Right ventricle myocardium superior (tissue), 1 donor: ENCODE measurements at regions of chr10 and their contacts with region 1.

Region 1: DNA sequence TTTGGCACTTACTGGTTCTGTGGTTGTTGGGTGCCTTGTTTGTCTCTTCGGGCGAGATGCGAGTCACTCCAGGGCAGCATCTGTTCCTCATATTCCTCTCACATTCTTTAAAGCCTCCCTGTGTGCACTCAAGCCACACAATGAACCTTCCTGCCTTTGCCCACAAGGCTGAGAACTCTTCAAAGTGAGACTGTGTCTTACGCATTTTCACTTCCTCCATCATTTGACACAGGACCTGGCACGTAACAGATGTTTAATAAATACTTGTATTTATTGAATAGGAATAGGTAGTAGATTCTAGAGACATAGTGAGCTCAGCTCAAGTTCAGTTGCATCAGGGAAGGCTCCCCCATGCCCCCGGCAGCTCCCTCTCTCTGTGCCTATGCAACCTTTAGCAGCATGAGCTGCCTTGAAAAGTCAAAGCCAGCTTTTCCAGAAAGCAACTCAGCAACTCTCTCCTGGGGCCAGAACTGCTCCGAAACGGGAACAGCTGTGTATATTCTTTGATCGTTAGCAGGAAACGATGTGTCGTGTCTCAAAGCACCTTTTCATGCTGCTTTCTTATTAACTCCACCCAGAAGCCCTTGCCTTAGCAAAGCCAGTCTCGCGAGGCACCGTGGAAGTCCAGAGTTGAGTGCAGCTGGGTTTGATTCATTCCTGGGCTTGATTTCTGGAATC is 97.5 kb downstream of the PFKFB3 start:
- DNase-seq: no peak
- ATAC-seq: peak; percentile 57

Region 2: GRCh38 chr10:5951167-5951711 is 349.0 kb before region 1 on chr10:
- intact Hi-C with region 1: no loop called
- DNase-seq: peak; percentile 73
- ATAC-seq: peak; percentile 84

Region 3: DNA sequence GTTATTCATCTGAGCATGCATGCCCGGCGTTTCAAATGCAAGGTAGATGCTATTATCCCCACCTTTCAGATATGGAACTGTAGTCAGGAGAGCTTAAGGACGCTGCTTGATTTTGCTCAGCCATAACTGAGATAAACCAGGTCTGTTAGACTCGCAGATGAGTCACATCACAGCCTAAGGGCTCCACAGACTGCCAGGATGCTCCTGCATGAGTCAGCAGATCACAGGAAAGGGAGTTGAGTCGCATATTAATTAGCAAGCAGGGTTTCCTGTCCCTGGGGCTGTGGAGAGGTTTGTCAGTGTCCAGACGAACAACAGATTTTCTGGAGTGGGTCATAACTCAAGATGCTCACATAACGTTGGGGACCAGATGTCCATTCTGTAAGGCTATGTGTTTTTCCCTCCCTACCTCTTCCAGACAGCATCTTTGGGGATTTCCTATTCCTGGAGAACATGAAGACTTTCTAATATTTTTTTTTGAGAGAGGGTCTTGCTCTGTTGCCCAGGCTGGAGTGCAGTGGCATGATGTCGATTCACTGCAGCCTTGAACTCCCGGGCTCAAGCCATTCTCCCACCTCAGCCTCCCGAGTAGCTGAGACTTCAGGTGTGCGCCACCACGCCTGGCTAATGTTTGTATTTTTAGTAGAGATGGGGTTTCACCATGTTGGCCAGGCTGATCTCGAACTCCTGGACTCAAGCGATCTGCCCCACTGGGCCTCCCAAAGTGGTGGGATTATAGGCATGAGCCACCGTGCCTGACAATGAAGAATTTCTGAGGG is 60.8 kb before region 1 on chr10:
- intact Hi-C with region 1: no loop called
- DNase-seq: no peak
- ATAC-seq: peak; percentile 39

Region 4: DNA sequence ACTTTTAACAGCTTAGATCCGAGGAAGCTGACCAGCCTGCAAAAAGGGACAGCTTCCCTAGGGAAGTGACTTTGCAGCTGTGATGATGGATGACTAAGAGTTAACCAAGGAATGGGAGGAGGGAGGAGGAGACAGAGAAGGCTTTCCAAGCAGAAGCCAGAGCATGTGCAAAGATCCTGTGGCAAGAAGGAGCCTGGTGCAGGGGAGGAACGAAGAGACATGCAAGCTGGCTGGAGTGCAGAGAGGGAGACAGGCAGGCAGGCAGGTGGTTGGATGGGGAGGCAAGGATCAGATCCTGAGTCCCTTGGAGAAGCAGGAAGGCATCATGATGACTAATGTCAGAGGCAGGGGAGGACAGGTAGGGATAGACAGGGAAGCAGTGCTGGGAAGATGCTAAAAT is 51.2 kb after region 1 on chr10:
- intact Hi-C with region 1: loop called (anchors 10 kb)
- DNase-seq: no peak
- ATAC-seq: no peak